Activated B cell treated with CpG ODN at 0.5 μM for 24 hours (primary cell): ENCODE measurements at regions of chr18 and their contacts with region 1.

Region 1: GRCh38 chr18:74896390-74896991 is 298.8 kb downstream of the ZNF407 start:
- DNase-seq: no peak
- ATAC-seq: peak; percentile 31
- H3K4me3 Mint-ChIP-seq: no peak overlapping the region
- H3K27ac Mint-ChIP-seq: no peak overlapping the region
- H3K4me1 Mint-ChIP-seq: no peaks in the 10 kb centered on the region
- H3K27me3 Mint-ChIP-seq: no peaks in the 10 kb centered on the region
- CTCF ChIP-seq: no peak

Region 2: GRCh38 chr18:74880706-74881278 is 15.7 kb before region 1 on chr18:
- CTCF ChIA-PET with region 1: no interaction called
- POLR2A ChIA-PET with region 1: no interaction called
- intact Hi-C with region 1: no loop called
- DNase-seq: no peak
- ATAC-seq: no peak
- H3K4me3 Mint-ChIP-seq: no peak overlapping the region
- H3K27ac Mint-ChIP-seq: no peak overlapping the region
- H3K4me1 Mint-ChIP-seq: no peaks in the 10 kb centered on the region
- H3K27me3 Mint-ChIP-seq: no peaks in the 10 kb centered on the region
- CTCF ChIP-seq: no peak

Region 3: DNA sequence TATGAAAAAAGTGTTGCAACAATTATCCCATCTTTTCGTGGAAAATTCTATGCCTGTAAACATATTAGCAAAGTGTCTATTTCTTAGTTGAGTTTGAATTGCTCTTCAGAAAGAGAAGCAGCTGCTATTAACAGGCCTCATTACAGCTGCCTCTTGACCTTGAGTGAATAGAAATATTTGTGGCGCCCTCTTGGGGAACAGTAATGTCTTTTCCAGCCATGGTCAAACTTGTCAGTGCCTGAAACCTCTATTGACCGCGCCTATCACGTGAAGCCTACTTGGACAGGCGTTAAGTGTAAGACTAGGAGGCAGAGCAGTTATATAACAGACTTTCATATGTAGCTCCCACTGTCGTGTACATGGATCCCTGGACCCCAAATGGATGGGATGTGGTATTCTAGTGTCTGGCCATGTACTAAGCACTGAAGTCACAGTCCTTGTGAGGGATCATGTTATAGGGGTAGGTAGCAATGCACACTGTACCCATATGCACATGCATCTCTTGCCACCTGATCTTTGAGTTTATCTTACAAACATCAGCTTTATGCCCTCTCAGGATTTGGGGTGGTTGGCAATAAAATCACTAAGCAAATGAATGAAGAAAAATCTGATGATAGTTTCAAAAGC is 67.4 kb after region 1 on chr18:
- CTCF ChIA-PET with region 1: no interaction called
- POLR2A ChIA-PET with region 1: no interaction called
- intact Hi-C with region 1: loop called (anchors 1 kb)
- DNase-seq: no peak
- ATAC-seq: no peak
- H3K4me3 Mint-ChIP-seq: no peak overlapping the region
- H3K27ac Mint-ChIP-seq: no peak overlapping the region
- H3K4me1 Mint-ChIP-seq: no peaks in the 10 kb centered on the region
- H3K27me3 Mint-ChIP-seq: no peaks in the 10 kb centered on the region
- CTCF ChIP-seq: no peak